ENCODE measurements at regions of chr17 and their contacts with region 1.

Region 1: DNA sequence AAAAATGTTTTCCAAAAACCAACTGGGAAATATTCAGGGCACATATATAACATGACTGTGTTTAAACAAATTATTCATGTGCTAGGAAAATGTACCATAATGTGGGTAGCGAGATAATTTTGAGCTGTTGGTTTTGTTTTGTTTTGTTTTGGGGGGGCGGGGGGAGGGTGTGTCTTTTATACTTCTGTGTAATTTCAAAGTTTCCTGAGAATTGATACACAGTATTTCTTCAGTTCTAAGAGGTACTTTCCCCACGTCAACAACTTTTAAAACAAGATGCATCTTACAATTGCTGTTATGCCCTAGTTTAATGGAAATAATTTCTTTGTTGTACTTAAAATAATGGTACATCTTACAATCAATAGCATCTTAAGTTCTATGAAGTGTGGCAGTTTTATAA is 99.7 kb upstream of the RPRML start:
- DNase-seq: no peak
- ATAC-seq: no peak
- H3K4me3 ChIP-seq: no peak overlapping the region
- H3K27ac ChIP-seq: no peak overlapping the region
- H3K4me1 ChIP-seq: no peaks in the 10 kb centered on the region
- H3K27me3 ChIP-seq: no peaks in the 10 kb centered on the region
- CTCF ChIP-seq: no peak
- EP300 ChIP-seq: no peak
- POLR2A ChIP-seq: no peak
- RAD21 ChIP-seq: no peak

Region 2: GRCh38 chr17:47066841-47067682 is 11.7 kb before region 1 on chr17:
- CTCF ChIA-PET with region 1: no interaction called
- POLR2A ChIA-PET with region 1: interaction called, 12 read pairs
- in situ Hi-C with region 1: no loop called
- intact Hi-C with region 1: no loop called
- DNase-seq: peak; percentile 94 to 97 (median 96)
- ATAC-seq: peak; percentile 94
- H3K4me3 ChIP-seq: peak overlapping the region; percentile 62
- H3K27ac ChIP-seq: peak overlapping the region; percentile 94
- H3K4me1 ChIP-seq: peaks cover 11 to 13% of the 10 kb centered on the region in 2 experiments
- H3K27me3 ChIP-seq: no peaks in the 10 kb centered on the region
- CTCF ChIP-seq: peak in 2 of 3 experiments; percentile 22 to 28; a peak in 3 of 6 replicates
- EP300 ChIP-seq: peak; percentile 83
- POLR2A ChIP-seq: peak; percentile 97
- RAD21 ChIP-seq: peak; percentile 15 to 19; a peak in 1 of 4 replicates